Heart left ventricle (tissue), 16 donors: ENCODE measurements at regions of chr15 and their contacts with region 1.

Region 1: GRCh38 chr15:83734487-83734886 is 80.6 kb downstream of the ADAMTSL3 start:
- DNase-seq: peak in 1 of 5 donors; percentile 26
- ATAC-seq: peak in 1 of 4 donors; percentile 55
- H3K4me3 ChIP-seq: no peak overlapping the region
- H3K27ac ChIP-seq: no peak overlapping the region
- H3K4me1 ChIP-seq: no peaks in the 10 kb centered on the region
- H3K27me3 ChIP-seq: no peaks in the 10 kb centered on the region
- CTCF ChIP-seq: peak in 9 of 12 donors; percentile 17 to 41 (median 33)
- POLR2A ChIP-seq: no peak

Region 2: DNA sequence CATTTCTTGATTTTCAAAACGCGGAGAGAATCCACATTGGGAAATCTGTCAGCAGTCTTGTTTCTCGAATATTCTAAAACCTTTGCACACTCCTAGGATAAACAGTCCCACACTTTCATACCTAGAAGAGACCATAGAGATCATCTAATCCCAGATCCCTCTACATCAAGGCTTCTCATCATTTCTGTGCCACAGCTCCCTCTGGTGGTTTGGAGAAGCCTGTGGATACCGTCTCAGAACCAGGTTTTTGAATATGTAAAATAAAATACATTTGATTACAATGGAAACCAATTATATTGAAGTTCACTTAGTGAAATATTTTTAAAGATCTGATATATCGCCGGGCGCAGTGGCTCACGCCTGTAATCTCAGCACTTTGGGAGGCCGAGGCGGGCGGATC is 289.1 kb after region 1 on chr15:
- intact Hi-C with region 1: loop called in 2 of 10 experiments (anchors 5 kb)
- DNase-seq: peak in 2 of 5 donors; percentile 11 to 47
- ATAC-seq: no peak
- H3K4me3 ChIP-seq: no peak overlapping the region
- H3K27ac ChIP-seq: no peak overlapping the region
- H3K4me1 ChIP-seq: no peaks in the 10 kb centered on the region
- H3K27me3 ChIP-seq: no peaks in the 10 kb centered on the region
- CTCF ChIP-seq: peak; percentile 38 to 67 (median 54)
- POLR2A ChIP-seq: no peak